Left ventricle myocardium superior (tissue), 1 donor: ENCODE measurements at regions of chr1 and their contacts with region 1.

Region 1: GRCh38 chr1:245458719-245459181 is 304.0 kb downstream of the KIF26B start:
- DNase-seq: no peak
- ATAC-seq: no peak

Region 2: GRCh38 chr1:245493029-245493428 is 34.3 kb after region 1 on chr1:
- intact Hi-C with region 1: loop called (anchors 2 kb)
- DNase-seq: no peak
- ATAC-seq: no peak

Region 3: GRCh38 chr1:245704765-245705164 is 246.0 kb after region 1 on chr1:
- intact Hi-C with region 1: no loop called
- DNase-seq: no peak
- ATAC-seq: no peak